ENCODE measurements at regions of chr6 and their contacts with region 1.

Region 1: GRCh38 chr6:87154993-87155841 is at the start of gene ZNF292:
- DNase-seq: peak; percentile 99
- H3K4me3 Mint-ChIP-seq: peak within 1 kb of the TSS; percentile 88
- H3K27ac Mint-ChIP-seq: peak within 1 kb of the TSS; percentile 97
- H3K4me1 Mint-ChIP-seq: peaks cover 41% of the 10 kb centered on the region
- H3K27me3 Mint-ChIP-seq: peaks cover 1% of the 10 kb centered on the region
- total RNA-seq, gene ZNF292: 51.9 to 52.5 TPM

Region 2: GRCh38 chr6:87115402-87116135 is 39.6 kb before region 1 on chr6:
- CTCF ChIA-PET with region 1: no interaction called
- POLR2A ChIA-PET with region 1: no interaction called
- intact Hi-C with region 1: loop called (anchors 1 kb)
- DNase-seq: peak; percentile 41
- H3K4me3 Mint-ChIP-seq: no peak overlapping the region
- H3K27ac Mint-ChIP-seq: no peak overlapping the region
- H3K4me1 Mint-ChIP-seq: peaks cover 9% of the 10 kb centered on the region
- H3K27me3 Mint-ChIP-seq: peaks cover 6% of the 10 kb centered on the region

Region 3: GRCh38 chr6:87210979-87211378 is 55.8 kb after region 1 on chr6:
- CTCF ChIA-PET with region 1: no interaction called
- POLR2A ChIA-PET with region 1: no interaction called
- intact Hi-C with region 1: loop called (anchors 1 kb)
- DNase-seq: peak; percentile 68
- H3K4me3 Mint-ChIP-seq: no peak overlapping the region
- H3K27ac Mint-ChIP-seq: peak overlapping the region; percentile 79
- H3K4me1 Mint-ChIP-seq: peaks cover 71% of the 10 kb centered on the region
- H3K27me3 Mint-ChIP-seq: no peaks in the 10 kb centered on the region

Region 4: GRCh38 chr6:87322304-87323212 is 167.3 kb after region 1 on chr6 and contains the start of gene SMIM8:
- CTCF ChIA-PET with region 1: no interaction called
- POLR2A ChIA-PET with region 1: no interaction called
- intact Hi-C with region 1: loop called (anchors 1 kb)
- DNase-seq: peak; percentile 90
- H3K4me3 Mint-ChIP-seq: peak within 1 kb of the TSS; percentile 98
- H3K27ac Mint-ChIP-seq: peak within 1 kb of the TSS; percentile 76
- H3K4me1 Mint-ChIP-seq: peaks cover 15% of the 10 kb centered on the region
- H3K27me3 Mint-ChIP-seq: no peaks in the 10 kb centered on the region
- total RNA-seq, gene SMIM8: 7.6 to 8.1 TPM

Region 5: DNA sequence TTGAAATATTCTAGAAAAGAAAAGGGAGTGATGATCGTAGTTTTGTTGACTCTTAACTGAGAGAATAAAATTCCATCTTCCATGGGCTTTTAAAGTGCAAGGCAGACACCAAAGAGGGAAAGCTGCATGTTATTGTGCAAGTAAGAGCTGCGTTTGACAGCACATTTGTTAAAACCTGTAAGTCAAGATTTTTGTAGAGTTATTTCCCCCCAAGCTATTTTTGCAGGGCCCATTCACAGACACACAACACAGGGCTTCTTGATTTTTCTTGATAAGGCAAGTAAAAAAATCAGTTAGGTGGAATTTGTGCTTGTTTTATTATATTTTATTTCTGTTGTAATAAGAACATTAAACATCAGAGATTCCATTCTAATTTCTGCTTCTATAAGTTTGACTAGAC is 266.4 kb after region 1 on chr6:
- CTCF ChIA-PET with region 1: no interaction called
- POLR2A ChIA-PET with region 1: no interaction called
- intact Hi-C with region 1: no loop called
- DNase-seq: no peak
- H3K4me3 Mint-ChIP-seq: no peak overlapping the region
- H3K27ac Mint-ChIP-seq: no peak overlapping the region
- H3K4me1 Mint-ChIP-seq: no peaks in the 10 kb centered on the region
- H3K27me3 Mint-ChIP-seq: peaks cover 4% of the 10 kb centered on the region

Region 6: GRCh38 chr6:87472525-87473418 is 317.6 kb after region 1 on chr6 and contains the start of gene SLC35A1:
- CTCF ChIA-PET with region 1: no interaction called
- POLR2A ChIA-PET with region 1: no interaction called
- intact Hi-C with region 1: loop called (anchors 2 kb)
- DNase-seq: peak; percentile 88
- H3K4me3 Mint-ChIP-seq: peak within 1 kb of the TSS; percentile 98
- H3K27ac Mint-ChIP-seq: peak within 1 kb of the TSS; percentile 91
- H3K4me1 Mint-ChIP-seq: peaks cover 19% of the 10 kb centered on the region
- H3K27me3 Mint-ChIP-seq: peaks cover 3% of the 10 kb centered on the region
- total RNA-seq, gene SLC35A1: 7.8 to 9.5 TPM

Region 7: GRCh38 chr6:87742106-87742505 is 586.9 kb after region 1 on chr6:
- CTCF ChIA-PET with region 1: no interaction called
- POLR2A ChIA-PET with region 1: no interaction called
- intact Hi-C with region 1: loop called (anchors 2 kb)
- DNase-seq: peak; percentile 90
- H3K4me3 Mint-ChIP-seq: peak overlapping the region; percentile 16
- H3K27ac Mint-ChIP-seq: peak overlapping the region; percentile 82
- H3K4me1 Mint-ChIP-seq: peaks cover 44% of the 10 kb centered on the region
- H3K27me3 Mint-ChIP-seq: no peaks in the 10 kb centered on the region